AG04449 (cell line): ENCODE measurements at regions of chr2 and their contacts with region 1.

Region 1: DNA sequence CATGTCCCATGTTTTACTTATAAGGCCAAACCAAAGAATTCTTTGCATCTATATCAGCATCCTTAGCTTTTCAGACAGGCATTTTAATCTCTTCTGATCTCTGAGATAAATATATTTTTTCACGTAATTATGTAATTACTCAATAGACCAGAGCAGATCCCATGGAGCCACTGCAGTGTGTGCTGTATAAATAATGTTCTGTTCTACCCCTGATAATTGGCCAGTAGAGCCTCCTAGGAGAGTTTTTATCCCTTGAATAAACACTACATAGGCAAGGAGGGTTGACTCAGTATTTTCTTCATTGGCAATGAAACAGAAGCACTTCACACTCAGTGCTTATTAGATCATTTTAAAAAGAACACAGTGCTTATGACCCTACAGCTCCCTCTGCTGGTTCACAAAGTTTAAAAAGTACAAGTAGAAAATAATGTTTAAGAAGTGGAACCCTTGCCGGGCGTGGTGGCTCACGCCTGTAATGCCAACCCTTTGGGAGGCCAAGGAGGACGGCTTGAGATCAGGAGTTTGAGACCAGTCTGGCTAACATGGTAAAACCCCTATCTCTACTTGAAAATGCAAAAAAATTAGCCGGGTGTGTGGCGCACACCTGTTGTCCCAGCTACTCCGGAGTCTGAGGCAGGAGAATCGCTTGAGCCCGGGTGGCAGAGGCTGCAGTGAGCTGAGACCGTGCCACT is 91.9 kb downstream of the PPP1R1C start:
- DNase-seq: peak; percentile 84
- H3K4me3 ChIP-seq: no peak overlapping the region
- CTCF ChIP-seq: peak; percentile 46

Region 2: GRCh38 chr2:181573140-181573736 is 504.4 kb before region 1 on chr2:
- CTCF ChIA-PET with region 1: interaction called, 16 read pairs
- POLR2A ChIA-PET with region 1: no interaction called
- DNase-seq: no peak
- H3K4me3 ChIP-seq: no peak overlapping the region
- CTCF ChIP-seq: peak; percentile 18

Region 3: DNA sequence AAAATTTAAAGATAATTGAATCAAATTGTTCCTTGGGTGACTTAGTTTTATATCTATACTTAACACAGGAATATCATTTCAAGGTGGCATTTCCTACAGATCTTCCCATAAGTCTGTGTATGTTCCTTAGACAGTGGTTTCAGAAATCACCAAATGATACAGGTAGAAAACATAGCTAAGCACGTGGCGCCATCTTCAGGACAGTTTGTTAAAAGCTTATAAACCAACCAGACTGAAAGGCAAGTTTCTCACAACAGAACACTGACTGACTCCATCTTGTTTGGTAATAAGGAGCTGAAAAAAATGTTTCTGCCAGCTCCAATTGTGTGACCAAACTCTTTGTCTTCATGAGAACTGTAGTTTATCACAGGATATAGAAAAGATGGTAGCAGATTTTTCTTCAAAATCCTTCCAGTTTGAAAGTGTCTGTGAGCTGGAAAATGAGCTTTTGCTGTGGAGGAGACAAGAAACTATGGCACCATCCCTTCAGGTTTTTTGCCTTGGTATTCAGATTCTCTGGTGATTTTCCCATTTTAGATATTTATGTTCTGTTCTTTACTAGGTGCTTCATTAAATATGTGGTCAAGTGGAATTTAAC is 362.5 kb before region 1 on chr2:
- CTCF ChIA-PET with region 1: interaction called, 20 read pairs
- POLR2A ChIA-PET with region 1: no interaction called
- DNase-seq: peak; percentile 41
- H3K4me3 ChIP-seq: no peak overlapping the region
- CTCF ChIP-seq: peak; percentile 60

Region 4: GRCh38 chr2:181904022-181904632 is 173.5 kb before region 1 on chr2:
- CTCF ChIA-PET with region 1: interaction called, 24 read pairs
- POLR2A ChIA-PET with region 1: no interaction called
- DNase-seq: no peak
- H3K4me3 ChIP-seq: no peak overlapping the region
- CTCF ChIP-seq: no peak

Region 5: DNA sequence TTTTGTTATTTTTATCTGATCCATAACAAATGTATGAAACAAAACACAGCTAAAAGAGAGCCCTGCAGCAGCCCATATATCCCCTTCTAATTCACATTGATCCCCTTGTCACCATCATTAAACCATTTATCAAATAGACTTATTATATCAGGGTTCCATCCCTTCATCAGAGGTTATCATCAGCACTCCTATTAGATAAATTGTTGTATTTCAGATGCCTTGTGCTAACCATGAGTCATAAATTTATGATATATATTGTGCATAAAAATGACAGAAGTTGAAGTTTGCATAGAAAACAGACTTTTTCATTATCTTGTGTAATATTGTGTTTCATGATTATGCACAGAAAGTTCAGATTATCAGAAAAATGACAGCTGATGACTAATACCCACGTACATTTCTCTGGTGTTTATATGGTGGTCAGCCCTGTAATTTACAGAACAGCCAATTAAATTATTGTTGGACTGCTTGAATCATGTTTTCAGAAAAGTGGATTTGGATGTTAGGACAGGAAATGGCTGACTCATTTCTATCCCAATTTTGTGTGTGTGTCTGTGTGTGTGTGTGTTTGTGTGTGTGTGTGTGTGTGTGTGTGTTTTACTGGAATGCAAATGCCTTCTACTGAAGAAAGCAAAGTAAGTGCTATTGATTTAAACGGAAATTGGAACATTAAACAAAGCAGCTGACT is 11.1 kb before region 1 on chr2:
- CTCF ChIA-PET with region 1: interaction called, 19 read pairs
- POLR2A ChIA-PET with region 1: no interaction called
- DNase-seq: peak; percentile 88
- H3K4me3 ChIP-seq: no peak overlapping the region
- CTCF ChIP-seq: no peak

Region 6: DNA sequence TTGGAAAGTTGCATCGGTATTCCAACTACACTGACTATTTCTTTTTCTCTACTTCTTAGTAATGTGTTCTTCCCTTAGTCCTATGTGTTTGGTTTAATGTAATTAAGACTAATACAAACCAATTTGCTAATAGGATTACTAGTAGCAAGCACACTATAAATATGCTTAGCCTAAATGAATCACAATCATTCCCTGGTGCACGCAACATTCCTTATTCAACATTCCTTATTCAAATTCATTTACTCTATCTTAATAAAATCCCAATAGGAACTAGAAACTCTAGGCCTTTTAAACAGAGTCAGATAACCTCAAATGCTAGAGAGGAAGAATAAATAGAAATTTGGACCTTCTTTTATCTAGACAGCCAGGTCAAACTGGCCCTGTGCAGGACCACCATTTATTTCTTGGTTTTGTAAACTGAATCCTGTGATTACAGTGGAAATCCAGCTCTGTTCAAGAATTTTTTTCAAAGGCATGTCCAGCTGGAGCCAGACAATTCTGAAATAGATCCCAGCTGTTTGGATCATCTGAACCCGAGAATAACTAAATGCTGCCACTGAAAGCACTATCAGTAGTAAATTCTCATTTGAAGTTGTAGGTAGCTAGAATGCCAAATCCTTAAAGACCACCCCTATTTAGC is 11.2 kb after region 1 on chr2:
- CTCF ChIA-PET with region 1: interaction called, 30 read pairs
- POLR2A ChIA-PET with region 1: no interaction called
- DNase-seq: no peak
- H3K4me3 ChIP-seq: no peak overlapping the region
- CTCF ChIP-seq: no peak